HEK293T (cell line): ENCODE measurements at regions of chr20 and their contacts with region 1.

Region 1: DNA sequence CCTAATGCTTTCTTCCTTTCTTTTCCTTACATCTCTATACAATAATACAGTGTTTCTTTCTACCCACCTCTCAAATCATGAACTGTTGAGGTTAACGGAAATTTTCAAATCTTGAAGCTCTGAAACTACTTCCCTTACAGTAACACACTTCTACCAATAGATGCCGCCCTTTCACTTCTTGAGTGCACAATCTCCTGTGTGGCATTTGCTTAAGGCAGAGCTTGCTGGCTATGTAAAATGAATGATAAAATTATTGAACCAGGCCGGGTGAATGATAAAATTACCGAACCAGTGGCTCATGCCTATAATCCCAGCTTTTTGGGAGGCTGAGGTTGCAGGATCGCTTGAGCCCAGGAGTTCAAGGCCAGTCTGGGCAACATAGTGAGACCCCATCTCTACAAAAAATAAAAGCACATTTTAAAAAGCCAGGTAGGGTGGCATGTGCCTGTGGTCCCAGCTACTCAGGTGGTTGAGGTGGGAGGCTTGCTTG is 56.8 kb downstream of the KCNS1 start:
- DNase-seq: peak; percentile 63

Region 2: GRCh38 chr20:44832724-44833123 is 211.4 kb before region 1 on chr20:
- CTCF ChIA-PET with region 1: no interaction called
- POLR2A ChIA-PET with region 1: no interaction called
- DNase-seq: no peak

Region 3: DNA sequence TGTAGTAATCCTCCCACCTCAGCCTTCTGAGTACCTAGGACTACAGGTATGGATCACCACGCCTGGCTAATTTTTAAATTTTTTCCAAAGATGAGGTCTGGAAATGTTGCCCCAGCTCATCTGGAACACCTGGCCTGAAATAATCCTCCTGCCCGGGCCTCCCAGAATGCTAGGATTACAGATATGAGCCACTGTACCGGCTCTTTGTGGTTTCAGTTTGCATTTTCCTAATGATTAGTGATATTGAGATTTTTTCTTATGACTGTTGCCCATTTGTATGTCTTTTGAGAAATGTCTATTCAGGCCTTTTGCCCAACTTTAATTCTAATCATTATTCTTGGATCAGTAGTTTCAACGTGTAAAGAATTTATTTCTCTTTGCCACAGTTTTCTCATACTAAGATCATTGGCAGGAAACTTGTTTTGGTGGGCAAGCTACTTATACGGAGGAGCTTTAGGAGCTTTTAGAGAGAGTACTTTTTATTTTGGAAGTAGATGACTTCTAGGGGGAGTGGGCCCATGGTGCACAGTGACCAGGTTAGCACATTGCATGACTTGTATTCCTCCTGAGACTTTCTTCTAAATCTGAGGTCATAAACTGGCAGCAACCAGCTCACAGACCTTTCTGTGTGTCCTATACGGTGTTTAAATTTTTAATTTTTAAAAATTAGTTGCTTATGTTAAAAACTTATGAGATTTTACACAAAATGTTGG is 15.5 kb before region 1 on chr20:
- CTCF ChIA-PET with region 1: no interaction called
- POLR2A ChIA-PET with region 1: no interaction called
- DNase-seq: no peak

Region 4: DNA sequence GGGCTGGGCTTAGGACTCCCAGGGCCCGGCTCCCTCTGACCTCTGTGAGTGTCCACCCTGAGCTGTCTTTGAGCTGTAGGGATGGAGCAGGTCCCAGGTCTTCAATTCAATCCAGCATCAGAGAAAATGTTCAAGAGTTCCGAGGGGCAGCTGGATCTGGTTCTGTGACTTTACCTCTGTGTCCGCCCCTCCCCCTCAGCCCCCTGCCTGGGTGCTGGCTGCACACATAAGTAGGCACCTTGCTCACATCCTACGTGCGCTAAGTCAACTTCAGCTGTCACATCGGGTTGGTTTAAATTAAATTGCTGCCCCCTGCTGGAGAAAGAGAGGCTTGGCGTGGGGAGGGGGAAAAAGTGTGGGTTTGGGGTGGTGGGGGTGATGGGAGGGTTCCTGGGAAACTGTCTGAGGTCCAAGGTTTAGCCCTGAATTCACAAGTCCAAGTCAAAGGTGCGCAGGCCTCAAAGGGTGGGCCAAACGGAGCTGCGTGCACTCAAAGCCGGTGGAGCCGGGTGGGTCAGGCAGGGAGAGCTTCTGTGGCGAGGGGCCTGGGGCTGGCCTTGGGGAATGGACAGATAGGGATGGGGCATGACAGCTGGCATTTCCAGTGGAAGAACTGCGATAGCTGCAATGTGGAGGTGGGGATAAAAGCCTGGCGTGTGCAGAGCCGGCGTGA is 67.8 kb after region 1 on chr20:
- CTCF ChIA-PET with region 1: interaction called, 21 read pairs
- POLR2A ChIA-PET with region 1: no interaction called
- DNase-seq: peak; percentile 45